Activated CD4-positive, alpha-beta T cell treated with anti-CD3 and anti-CD28 coated beads for 36 hours (primary cell): ENCODE measurements at regions of chr4 and their contacts with region 1.

Region 1: GRCh38 chr4:1579901-1580691 is 104.0 kb downstream of the FAM53A start:
- DNase-seq: peak; percentile 98
- ATAC-seq: peak; percentile 79
- H3K4me3 Mint-ChIP-seq: peak overlapping the region; percentile 60
- H3K27ac Mint-ChIP-seq: no peak overlapping the region
- H3K4me1 Mint-ChIP-seq: peaks cover 4% of the 10 kb centered on the region
- H3K27me3 Mint-ChIP-seq: no peaks in the 10 kb centered on the region

Region 2: DNA sequence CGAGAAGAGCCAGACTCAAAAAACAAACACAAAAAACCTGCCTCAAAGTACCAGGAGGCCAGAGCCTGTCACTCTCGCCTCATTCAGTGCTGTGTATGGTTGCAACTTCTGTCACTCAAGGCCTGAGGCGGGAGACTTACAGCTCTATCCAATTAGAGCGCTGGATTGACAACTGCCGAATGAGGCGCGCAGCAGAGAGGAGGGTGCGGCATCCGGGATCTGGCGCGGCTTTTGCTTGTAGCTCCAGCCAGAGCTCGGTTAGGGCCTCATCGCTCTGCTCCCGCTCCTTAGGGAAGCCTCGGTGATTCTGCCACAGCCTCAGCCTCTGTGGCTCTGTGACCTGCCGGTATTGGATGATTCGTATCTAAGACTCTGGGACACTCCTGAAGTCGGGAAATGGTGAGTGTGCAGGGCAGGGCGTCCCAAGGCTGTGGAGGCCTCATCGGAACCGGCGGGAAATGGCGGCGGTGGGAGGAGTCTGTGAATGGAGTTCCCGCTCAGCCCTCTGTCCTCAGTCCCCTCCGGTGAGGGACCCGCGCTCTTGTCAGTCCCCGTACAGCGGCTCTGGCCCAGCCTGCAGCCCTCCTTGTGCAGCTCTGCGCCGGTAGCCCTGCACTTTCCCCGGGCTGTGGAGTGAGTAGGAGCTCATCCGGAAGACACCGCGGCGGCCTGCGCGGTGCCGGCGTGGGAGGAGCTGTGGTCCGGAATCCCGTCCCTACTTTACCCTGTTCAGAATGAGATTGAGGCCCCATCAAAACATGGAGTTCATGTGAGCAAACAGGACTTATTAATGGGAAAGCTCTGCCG is 1455.6 kb before region 1 on chr4 and contains the start of gene ZNF718:
- CTCF ChIA-PET with region 1: no interaction called
- POLR2A ChIA-PET with region 1: no interaction called
- intact Hi-C with region 1: loop called in 1 of 2 experiments (anchors 5 kb)
- DNase-seq: peak; percentile 97
- ATAC-seq: peak; percentile 98
- H3K4me3 Mint-ChIP-seq: peak within 1 kb of the TSS; percentile 91
- H3K27ac Mint-ChIP-seq: peak within 1 kb of the TSS; percentile 100
- H3K4me1 Mint-ChIP-seq: peaks cover 44% of the 10 kb centered on the region
- H3K27me3 Mint-ChIP-seq: no peaks in the 10 kb centered on the region
- total RNA-seq, gene ZNF718: 9.7 to 10.3 TPM

Region 3: GRCh38 chr4:973431-974397 is 606.4 kb before region 1 on chr4 and contains the start of gene DGKQ:
- CTCF ChIA-PET with region 1: no interaction called
- POLR2A ChIA-PET with region 1: no interaction called
- intact Hi-C with region 1: loop called in 1 of 2 experiments (anchors 1 kb)
- DNase-seq: peak; percentile 93
- ATAC-seq: peak; percentile 96
- H3K4me3 Mint-ChIP-seq: peak within 1 kb of the TSS; percentile 58
- H3K27ac Mint-ChIP-seq: no peak within 1 kb of the TSS
- H3K4me1 Mint-ChIP-seq: peaks cover 6% of the 10 kb centered on the region
- H3K27me3 Mint-ChIP-seq: no peaks in the 10 kb centered on the region
- total RNA-seq, gene DGKQ: 9.3 to 11.3 TPM

Region 4: GRCh38 chr4:1346781-1347409 is 233.2 kb before region 1 on chr4 and contains the start of gene UVSSA:
- CTCF ChIA-PET with region 1: no interaction called
- POLR2A ChIA-PET with region 1: no interaction called
- intact Hi-C with region 1: loop called in 1 of 2 experiments (anchors 1 kb)
- DNase-seq: peak; percentile 100
- ATAC-seq: peak; percentile 95
- H3K4me3 Mint-ChIP-seq: peak within 1 kb of the TSS; percentile 86
- H3K27ac Mint-ChIP-seq: peak within 1 kb of the TSS; percentile 87
- H3K4me1 Mint-ChIP-seq: peaks cover 47% of the 10 kb centered on the region
- H3K27me3 Mint-ChIP-seq: no peaks in the 10 kb centered on the region
- total RNA-seq, gene UVSSA: 14.8 to 18.1 TPM

Region 5: DNA sequence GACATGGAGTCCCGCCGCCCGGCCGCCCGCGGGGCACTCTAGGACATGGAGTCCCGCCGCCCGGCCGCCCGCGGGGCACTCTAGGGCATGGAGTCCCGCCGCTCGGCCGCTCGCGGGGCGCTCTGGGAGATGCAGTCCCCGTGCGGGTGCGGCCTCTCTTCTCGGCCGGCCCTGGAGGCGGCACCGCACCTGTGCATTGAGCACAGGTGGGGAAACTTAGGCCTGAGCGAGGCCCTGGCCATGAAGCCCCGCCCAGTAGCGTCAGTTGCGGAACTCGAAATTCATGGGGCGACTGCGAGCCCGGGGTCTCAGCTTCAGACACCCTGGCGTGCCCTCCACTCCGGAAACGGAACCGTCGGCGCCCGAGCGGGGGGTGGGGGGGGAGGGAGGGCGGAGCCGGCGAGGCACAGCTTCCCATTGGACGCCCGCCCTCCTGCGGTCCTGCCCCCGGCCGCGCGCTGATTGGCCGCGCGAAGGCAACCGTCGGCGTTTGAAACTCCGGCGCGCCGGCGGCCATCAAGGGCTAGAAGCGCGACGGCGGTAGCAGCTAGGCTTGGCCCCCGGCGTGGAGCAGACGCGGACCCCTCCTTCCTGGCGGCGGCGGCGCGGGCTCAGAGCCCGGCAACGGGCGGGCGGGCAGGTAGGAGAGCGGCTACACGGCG is 141.0 kb after region 1 on chr4 and contains the starts of genes TACC3 and TMEM129:
- CTCF ChIA-PET with region 1: no interaction called
- POLR2A ChIA-PET with region 1: no interaction called
- intact Hi-C with region 1: loop called in 1 of 2 experiments (anchors 1 kb)
- DNase-seq: peak; percentile 96
- ATAC-seq: peak; percentile 81
- H3K4me3 Mint-ChIP-seq: peak within 1 kb of the TSS; percentile 96
- H3K27ac Mint-ChIP-seq: peak within 1 kb of the TSS; percentile 99
- H3K4me1 Mint-ChIP-seq: peaks cover 52% of the 10 kb centered on the region
- H3K27me3 Mint-ChIP-seq: no peaks in the 10 kb centered on the region
- total RNA-seq, gene TACC3: 197 to 206 TPM
- total RNA-seq, gene TMEM129: 13.7 to 14.6 TPM

Region 6: DNA sequence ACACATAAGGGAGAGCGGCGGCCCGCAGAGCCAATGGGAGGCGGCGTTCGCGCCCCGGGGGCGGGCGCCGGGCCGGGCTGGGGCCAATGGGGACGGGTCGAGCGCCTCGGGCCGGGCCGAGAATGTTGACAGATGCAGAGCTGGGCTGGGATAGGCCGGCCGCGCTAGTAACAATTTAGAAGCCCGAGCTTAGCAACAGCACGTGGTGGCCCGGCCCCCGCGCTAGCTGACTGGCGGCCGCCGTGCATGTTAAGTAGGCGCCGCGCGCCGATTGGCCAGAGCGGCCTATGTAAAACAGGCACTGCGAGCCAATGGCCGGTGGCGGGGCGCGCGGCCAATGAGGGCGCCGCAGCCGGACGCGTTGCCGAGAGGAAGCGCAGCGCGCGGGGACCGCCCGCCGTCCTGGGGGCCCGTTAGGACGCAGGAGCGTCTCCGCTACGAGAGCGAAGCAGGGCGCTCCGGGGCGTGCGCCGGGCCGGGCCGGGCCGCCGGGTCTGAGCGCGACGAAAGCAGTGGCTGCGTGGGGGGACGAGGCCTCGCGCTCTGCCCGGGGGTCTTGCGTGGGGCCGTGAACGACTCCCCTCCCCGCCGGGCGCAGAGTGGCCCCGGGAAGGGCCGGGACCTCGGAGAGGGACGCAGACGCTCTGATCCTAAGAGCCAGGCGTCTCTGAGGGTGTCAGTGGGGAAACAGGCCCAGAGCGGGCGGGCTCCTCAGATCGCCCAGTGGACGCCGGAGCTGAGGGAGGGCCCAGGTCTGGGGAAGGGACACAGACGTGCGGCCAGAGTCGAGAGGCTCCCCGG is 682.2 kb after region 1 on chr4:
- CTCF ChIA-PET with region 1: no interaction called
- POLR2A ChIA-PET with region 1: no interaction called
- intact Hi-C with region 1: loop called in 1 of 2 experiments (anchors 1 kb)
- DNase-seq: peak; percentile 99
- ATAC-seq: peak; percentile 96
- H3K4me3 Mint-ChIP-seq: peak overlapping the region; percentile 61
- H3K27ac Mint-ChIP-seq: no peak overlapping the region
- H3K4me1 Mint-ChIP-seq: peaks cover 2% of the 10 kb centered on the region
- H3K27me3 Mint-ChIP-seq: no peaks in the 10 kb centered on the region